ENCODE measurements at regions of chr10 and their contacts with region 1.

Region 1: DNA sequence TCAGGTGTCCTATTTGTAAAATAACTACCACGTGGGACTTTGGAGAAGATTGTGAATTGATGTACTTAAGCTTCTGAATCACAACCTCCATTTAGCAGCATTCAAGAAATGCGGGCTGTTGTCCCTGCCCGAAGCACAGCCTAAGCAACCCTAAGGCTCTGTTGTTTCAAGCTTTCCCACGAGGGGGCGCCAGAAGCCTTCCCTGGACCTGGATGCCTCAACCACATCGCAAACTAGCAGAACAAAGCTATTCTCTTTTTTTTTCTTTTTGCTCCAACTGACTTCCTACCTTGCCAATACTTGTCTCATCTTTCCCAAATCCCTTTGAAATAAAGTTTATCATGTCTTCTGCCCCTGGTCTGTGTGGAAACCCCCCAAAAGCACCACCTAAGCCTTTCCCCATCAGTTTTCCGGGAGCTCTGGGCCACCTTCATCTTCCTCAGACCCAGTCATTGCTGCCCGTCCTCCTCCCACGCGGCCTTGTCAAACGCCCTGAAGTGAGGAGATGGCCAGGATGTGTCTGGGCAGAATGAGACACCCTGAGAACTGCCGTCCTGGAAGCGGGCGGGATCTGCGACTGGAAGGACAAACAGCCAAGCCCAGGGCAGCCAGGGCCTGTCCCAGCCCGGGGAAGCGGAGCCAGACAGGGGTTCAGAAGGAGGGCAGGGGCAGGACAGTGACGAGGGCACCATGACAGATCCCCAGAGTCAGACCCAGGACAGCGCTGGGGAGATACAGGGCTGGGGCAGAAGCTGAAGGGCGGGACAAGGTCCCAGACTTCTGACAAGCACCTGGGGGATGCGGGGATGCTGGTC is 112.7 kb downstream of the SLIT1 start:
- DNase-seq: peak; percentile 78
- H3K4me3 ChIP-seq: no peak overlapping the region
- H3K27ac ChIP-seq: no peak overlapping the region
- H3K4me1 ChIP-seq: no peaks in the 10 kb centered on the region
- H3K27me3 ChIP-seq: peaks cover 2 to 4% of the 10 kb centered on the region in 2 experiments
- CTCF ChIP-seq: peak; percentile 88 to 95
- POLR2A ChIP-seq: no peak

Region 2: DNA sequence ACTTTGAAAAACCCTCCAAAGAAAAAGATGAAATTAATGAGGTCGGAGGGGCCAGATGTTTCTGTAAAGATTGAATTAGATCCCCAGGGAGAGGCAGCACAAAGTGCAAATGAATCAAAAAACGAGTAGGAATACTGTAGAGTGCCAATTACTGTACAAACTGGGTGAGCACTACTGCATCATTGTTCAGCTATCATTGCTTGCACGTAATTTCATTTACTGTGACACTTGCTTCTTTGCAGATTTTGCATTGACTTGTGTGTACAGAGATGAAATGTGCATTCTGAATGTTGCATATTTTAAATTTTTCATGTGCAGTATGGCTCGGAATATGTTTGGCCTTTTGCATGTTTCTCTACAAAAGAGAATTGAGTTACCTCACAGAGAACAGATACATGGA is 117.3 kb before region 1 on chr10:
- CTCF ChIA-PET with region 1: no interaction called
- POLR2A ChIA-PET with region 1: no interaction called
- dilution Hi-C with region 1: no loop called
- intact Hi-C with region 1: no loop called
- DNase-seq: no peak
- H3K4me3 ChIP-seq: no peak overlapping the region
- H3K27ac ChIP-seq: no peak overlapping the region
- H3K4me1 ChIP-seq: peaks cover 9% of the 10 kb centered on the region
- H3K27me3 ChIP-seq: no peaks in the 10 kb centered on the region
- CTCF ChIP-seq: no peak
- POLR2A ChIP-seq: no peak

Region 3: DNA sequence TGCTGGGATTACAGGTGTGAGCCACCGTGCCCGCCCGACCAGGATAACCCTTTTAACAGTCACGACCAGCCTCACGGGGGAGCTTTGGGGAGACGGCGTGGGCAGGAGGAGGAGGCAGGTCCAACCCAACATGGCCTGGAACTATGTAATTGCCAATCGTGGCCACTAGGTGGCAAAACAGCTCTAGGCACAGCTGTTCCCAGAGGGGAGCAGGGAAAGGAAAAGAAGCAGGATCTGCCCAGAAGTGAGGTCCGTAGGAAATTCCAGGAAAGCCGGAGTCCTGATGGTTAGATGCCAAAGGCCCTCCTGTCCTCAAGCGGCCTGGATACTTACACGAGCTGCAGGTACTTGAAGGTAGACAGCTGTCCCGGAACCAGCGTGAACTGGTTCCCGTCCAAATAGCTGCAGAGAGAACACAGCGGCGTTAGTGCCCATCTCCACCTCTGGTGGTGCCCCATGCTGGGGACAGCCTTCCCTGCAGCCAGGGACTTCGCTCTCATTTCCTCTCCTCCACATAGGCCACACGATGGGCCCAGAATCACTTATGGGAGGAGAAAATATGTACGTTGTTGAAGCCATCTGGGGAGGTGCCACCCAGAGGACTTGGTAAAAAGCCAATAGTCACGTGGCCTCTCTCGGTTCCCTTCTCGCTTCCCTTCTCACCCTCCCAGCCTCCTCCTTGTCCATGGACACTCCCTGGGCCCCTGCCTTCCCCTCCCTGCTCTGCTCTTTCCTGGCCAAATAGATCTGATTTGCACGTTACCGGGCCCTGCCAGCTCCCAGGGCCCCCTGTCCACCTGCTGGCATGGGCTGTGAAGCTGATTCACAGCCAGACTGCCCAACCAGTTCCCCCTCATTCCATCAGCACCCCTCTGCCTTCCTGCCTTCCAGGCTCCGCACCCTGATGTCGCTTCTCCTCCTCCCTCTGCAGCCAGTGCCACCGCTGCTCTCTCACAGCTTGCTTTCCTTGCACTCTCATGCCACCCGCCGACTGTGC is 35.4 kb before region 1 on chr10:
- CTCF ChIA-PET with region 1: interaction called, 29 read pairs
- POLR2A ChIA-PET with region 1: no interaction called
- dilution Hi-C with region 1: no loop called
- intact Hi-C with region 1: no loop called
- DNase-seq: peak; percentile 82
- H3K4me3 ChIP-seq: peak overlapping the region in 2 of 3 experiments; percentile 20 to 35
- H3K27ac ChIP-seq: no peak overlapping the region
- H3K4me1 ChIP-seq: peaks cover 5% of the 10 kb centered on the region
- H3K27me3 ChIP-seq: peaks cover 0 to 2% of the 10 kb centered on the region in 2 experiments
- CTCF ChIP-seq: peak; percentile 81 to 87
- POLR2A ChIP-seq: no peak

Region 4: DNA sequence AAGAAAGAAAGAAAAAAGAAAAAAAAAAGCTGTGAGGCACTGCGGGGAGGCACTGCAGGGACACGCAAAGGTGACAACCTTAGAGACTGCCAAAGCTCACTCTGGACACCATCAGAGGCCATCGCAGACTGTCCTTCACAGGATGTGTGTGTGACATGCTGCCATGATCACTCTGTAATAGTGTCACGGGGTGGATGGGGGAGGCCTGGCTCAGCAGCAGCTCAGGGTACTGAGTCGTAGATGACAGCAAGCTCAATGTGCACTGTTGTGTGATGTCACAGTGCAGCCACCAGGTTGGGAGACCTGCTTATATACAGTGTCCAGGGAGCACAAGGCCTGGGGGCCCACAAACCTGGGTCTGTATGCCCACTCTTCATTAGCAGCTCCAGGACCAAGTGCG is 29.4 kb after region 1 on chr10:
- CTCF ChIA-PET with region 1: interaction called, 17 read pairs
- POLR2A ChIA-PET with region 1: no interaction called
- dilution Hi-C with region 1: no loop called
- intact Hi-C with region 1: no loop called
- DNase-seq: no peak
- H3K4me3 ChIP-seq: no peak overlapping the region
- H3K27ac ChIP-seq: no peak overlapping the region
- H3K4me1 ChIP-seq: no peaks in the 10 kb centered on the region
- H3K27me3 ChIP-seq: peaks cover 0 to 10% of the 10 kb centered on the region in 2 experiments
- CTCF ChIP-seq: no peak
- POLR2A ChIP-seq: no peak

Region 5: DNA sequence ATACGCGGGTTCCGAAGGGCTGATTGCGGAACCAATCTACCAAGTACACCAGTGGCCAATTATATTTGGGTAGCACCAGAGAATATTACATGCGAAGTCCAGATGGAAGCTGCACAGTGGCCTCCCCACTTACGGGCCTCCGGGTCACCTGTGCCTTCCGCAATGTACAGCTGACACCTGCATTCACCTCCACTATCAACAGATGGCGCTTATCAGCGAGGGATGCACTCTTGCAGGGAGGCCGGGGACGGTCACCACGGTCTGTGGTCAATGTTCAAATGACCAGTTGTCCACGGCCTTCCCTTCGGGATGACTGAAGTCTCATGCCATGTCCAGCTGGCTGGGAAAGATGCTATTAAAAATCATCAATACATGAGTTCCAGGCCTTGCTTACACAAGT is 65.1 kb after region 1 on chr10:
- CTCF ChIA-PET with region 1: interaction called, 11 read pairs
- POLR2A ChIA-PET with region 1: no interaction called
- dilution Hi-C with region 1: no loop called
- intact Hi-C with region 1: no loop called
- DNase-seq: no peak
- H3K4me3 ChIP-seq: no peak overlapping the region
- H3K27ac ChIP-seq: no peak overlapping the region
- H3K4me1 ChIP-seq: no peaks in the 10 kb centered on the region
- H3K27me3 ChIP-seq: peaks cover 22% of the 10 kb centered on the region in 2 experiments
- CTCF ChIP-seq: peak in 1 of 2 donors; percentile 16
- POLR2A ChIP-seq: no peak

Region 6: GRCh38 chr10:97222326-97222961 is 149.4 kb after region 1 on chr10:
- CTCF ChIA-PET with region 1: interaction called, 47 read pairs
- POLR2A ChIA-PET with region 1: no interaction called
- dilution Hi-C with region 1: no loop called
- intact Hi-C with region 1: no loop called
- DNase-seq: no peak
- H3K4me3 ChIP-seq: no peak overlapping the region
- H3K27ac ChIP-seq: no peak overlapping the region
- H3K4me1 ChIP-seq: peaks cover 18% of the 10 kb centered on the region
- H3K27me3 ChIP-seq: no peaks in the 10 kb centered on the region
- CTCF ChIP-seq: no peak
- POLR2A ChIP-seq: no peak

Region 7: GRCh38 chr10:97334370-97335175 is 261.5 kb after region 1 on chr10 and contains the start of gene FRAT2:
- CTCF ChIA-PET with region 1: interaction called, 25 read pairs
- POLR2A ChIA-PET with region 1: no interaction called
- dilution Hi-C with region 1: no loop called
- intact Hi-C with region 1: loop called (anchors 10 kb)
- DNase-seq: peak; percentile 91
- H3K4me3 ChIP-seq: peak within 1 kb of the TSS; percentile 39 to 84 (median 80)
- H3K27ac ChIP-seq: peak within 1 kb of the TSS; percentile 100
- H3K4me1 ChIP-seq: peaks cover 11% of the 10 kb centered on the region
- H3K27me3 ChIP-seq: peaks cover 20 to 29% of the 10 kb centered on the region in 2 experiments
- CTCF ChIP-seq: no peak
- POLR2A ChIP-seq: peak; percentile 56
- total RNA-seq, gene FRAT2: 11.3 and 11.5 TPM in 2 replicates

Region 8: GRCh38 chr10:98150544-98150943 is 1077.5 kb after region 1 on chr10:
- CTCF ChIA-PET with region 1: no interaction called
- POLR2A ChIA-PET with region 1: no interaction called
- dilution Hi-C with region 1: no loop called
- intact Hi-C with region 1: no loop called
- DNase-seq: no peak
- H3K4me3 ChIP-seq: no peak overlapping the region
- H3K27ac ChIP-seq: no peak overlapping the region
- H3K4me1 ChIP-seq: no peaks in the 10 kb centered on the region
- H3K27me3 ChIP-seq: no peaks in the 10 kb centered on the region
- CTCF ChIP-seq: no peak
- POLR2A ChIP-seq: no peak